Calu3 (cell line): ENCODE measurements at regions of chr5 and their contacts with region 1.

Region 1: GRCh38 chr5:181043285-181044092 is 3.4 kb downstream of the BTNL9 start:
- DNase-seq: peak; percentile 53
- H3K4me3 Mint-ChIP-seq: no peak overlapping the region
- H3K27ac Mint-ChIP-seq: no peak overlapping the region
- H3K4me1 Mint-ChIP-seq: no peaks in the 10 kb centered on the region
- H3K27me3 Mint-ChIP-seq: no peaks in the 10 kb centered on the region
- CTCF ChIP-seq: no peak

Region 2: DNA sequence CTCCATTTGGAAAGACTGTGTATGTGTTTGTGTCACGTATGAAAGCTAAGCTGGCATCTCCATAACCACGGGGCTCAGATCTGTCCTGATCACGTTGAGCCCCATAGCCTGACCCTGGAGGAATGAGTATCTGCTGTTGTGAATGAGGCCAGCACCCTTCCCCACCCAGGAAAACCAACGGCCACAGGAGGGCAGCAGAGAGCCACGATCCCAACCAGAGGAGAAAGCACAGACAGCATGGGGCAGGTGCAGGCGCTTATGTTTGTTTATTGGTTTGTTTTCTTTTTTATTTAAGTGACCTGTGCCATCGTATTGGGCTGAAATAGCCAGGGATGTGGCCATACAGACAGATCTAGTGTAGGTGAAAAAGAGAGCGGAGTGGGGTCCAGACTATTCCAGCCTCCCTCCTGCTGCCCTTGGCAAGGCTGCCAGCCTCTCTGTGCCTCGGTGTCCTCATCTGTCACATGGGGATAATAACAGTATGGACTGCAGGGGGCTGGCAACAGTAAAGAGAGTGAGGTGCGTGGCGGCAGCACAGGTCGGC is 115.9 kb after region 1 on chr5:
- CTCF ChIA-PET with region 1: no interaction called
- intact Hi-C with region 1: loop called (anchors 2 kb)
- DNase-seq: peak; percentile 95
- H3K4me3 Mint-ChIP-seq: no peak overlapping the region
- H3K27ac Mint-ChIP-seq: peak overlapping the region; percentile 46
- H3K4me1 Mint-ChIP-seq: peaks cover 14% of the 10 kb centered on the region
- H3K27me3 Mint-ChIP-seq: peaks cover 32% of the 10 kb centered on the region
- CTCF ChIP-seq: peak; percentile 62